WTC11 (cell line): ENCODE measurements at regions of chr20 and their contacts with region 1.

Region 1: GRCh38 chr20:51042654-51043247 is 19.8 kb upstream of the KCNG1 start:
- DNase-seq: peak; percentile 65
- ATAC-seq: peak; percentile 93
- H3K4me3 Mint-ChIP-seq: no peak overlapping the region
- H3K27ac Mint-ChIP-seq: no peak overlapping the region
- H3K4me1 Mint-ChIP-seq: no peaks in the 10 kb centered on the region
- H3K27me3 Mint-ChIP-seq: no peaks in the 10 kb centered on the region; the same call in 1 of the 2 replicates
- CTCF ChIP-seq: 0 out of 2 replicates have a peak, but pooled peaks have one; percentile 27

Region 2: DNA sequence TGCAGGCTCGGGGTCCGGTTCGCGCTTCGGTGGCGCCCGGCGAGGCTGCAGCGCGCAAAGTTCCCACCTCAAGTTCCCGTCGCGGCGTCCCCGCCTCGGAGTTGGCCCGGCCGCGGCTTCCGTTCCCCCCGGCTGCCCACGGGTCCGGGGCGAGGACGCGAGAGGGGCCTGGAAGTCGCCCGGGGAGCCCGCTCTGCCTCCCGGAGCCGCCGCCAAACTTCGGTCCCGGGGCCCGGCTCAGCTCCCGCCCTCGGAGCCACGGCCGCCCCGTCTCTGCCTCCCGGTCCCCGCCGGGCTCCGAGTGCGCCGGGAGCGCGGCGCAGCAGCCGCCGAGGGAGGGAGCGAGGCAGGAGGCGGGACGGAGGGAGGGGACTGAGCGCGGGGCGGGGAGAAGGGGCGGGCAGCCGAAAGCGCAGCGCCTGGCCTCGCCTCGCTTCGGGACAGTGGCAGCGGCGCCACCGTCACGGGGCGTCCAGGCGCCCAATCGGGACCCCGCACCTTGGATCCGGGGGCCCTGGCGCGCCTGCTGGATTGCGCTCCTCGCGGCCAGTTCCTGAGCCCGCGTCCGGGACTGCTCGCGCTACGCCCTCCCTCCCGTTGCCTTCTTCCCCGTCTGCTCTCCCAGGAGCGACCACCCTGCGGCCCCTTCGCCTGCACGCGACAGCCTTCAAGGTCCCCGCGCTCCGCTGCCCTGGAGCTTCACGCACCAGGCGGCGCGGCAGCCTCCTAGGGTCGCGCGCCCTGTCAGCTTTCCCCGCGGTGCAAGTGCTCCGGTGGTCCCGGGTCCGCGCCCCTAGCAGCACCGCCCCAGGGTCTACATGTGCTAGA is 19.7 kb before region 1 on chr20 and contains the start of gene KCNG1:
- CTCF ChIA-PET with region 1: interaction called, 21 read pairs
- POLR2A ChIA-PET with region 1: no interaction called
- DNase-seq: peak; percentile 79
- ATAC-seq: peak; percentile 82
- H3K4me3 Mint-ChIP-seq: peak within 1 kb of the TSS; percentile 72
- H3K27ac Mint-ChIP-seq: no peak within 1 kb of the TSS
- H3K4me1 Mint-ChIP-seq: peaks cover 36% of the 10 kb centered on the region
- H3K27me3 Mint-ChIP-seq: peaks cover 49% of the 10 kb centered on the region
- CTCF ChIP-seq: no peak
- total RNA-seq, gene KCNG1: 31.2 to 34.6 TPM (median 31.6 TPM) in 3 replicates

Region 3: DNA sequence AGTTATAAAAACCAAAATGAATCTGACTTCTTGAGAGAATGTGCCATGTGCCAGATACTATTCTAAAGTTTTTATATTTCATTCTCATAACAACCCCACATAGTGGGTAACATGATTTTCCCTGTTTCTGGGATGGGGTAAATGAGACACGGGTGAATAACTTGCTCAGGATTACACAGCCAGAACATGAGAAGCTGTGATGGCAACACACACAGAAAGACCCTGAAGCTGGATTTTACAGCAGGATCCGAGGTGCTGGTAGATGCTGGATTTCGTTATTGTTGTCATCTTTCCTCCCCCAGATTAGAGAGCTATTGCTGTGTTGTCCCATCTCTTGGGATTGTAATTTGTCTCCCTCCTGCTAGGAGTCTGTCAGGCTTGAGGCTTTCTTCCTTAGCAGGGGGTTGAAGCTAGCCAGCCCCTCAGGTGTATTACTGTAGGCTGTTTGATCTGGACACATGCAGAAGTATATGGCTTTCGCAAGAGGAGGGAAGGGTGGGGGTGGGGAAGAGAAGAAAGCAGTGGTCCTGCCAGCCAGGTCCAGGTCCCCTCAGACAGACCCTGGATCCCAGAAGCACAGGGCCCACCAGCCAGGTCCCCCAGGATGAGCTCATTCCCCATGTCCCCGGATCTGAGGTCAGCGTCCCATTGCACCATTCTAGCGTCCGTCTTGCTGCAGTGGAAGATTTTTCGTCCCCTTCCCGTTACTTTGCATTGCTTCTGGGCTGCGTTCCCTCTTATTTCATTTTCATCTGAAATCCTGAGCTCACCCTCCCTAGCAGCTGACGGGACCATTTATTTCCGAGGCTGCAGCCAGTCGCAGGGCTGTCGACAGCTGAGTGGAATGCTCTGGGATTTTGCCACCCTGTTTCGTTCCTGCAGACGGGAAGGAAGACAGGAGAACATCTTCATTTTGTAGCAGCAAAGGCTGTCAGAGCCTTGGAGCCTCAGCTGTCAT is 12.5 kb before region 1 on chr20:
- CTCF ChIA-PET with region 1: interaction called, 21 read pairs
- POLR2A ChIA-PET with region 1: no interaction called
- DNase-seq: no peak
- ATAC-seq: no peak
- H3K4me3 Mint-ChIP-seq: no peak overlapping the region
- H3K27ac Mint-ChIP-seq: no peak overlapping the region
- H3K4me1 Mint-ChIP-seq: 0 out of 2 replicates have a peak, but pooled peaks cover 3% of the 10 kb centered on the region
- H3K27me3 Mint-ChIP-seq: peaks cover 51% of the 10 kb centered on the region
- CTCF ChIP-seq: no peak

Region 4: GRCh38 chr20:51095633-51096513 is 53.1 kb after region 1 on chr20:
- CTCF ChIA-PET with region 1: no interaction called
- POLR2A ChIA-PET with region 1: no interaction called
- DNase-seq: no peak
- ATAC-seq: no peak
- H3K4me3 Mint-ChIP-seq: no peak overlapping the region
- H3K27ac Mint-ChIP-seq: no peak overlapping the region
- H3K4me1 Mint-ChIP-seq: peaks cover 24% of the 10 kb centered on the region
- H3K27me3 Mint-ChIP-seq: no peaks in the 10 kb centered on the region
- CTCF ChIP-seq: no peak

Region 5: DNA sequence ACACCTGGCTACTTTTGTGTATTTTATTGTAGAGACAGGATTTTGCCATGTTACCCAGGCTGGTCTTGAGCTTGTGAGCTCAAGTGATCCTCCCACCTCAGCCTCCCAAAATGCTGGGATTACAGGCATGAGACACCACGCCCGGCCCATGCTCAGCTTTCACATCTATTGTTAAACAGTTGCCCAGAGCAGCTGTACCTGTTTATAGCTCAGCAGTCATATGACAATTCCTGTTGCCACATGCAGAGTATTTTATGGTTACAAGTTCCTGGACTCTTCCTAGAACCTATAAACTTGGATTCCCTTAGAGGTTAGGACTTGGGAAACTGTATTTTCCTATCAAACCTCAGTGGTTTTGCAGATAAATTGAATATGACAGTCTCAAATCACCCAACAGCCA is 168.4 kb after region 1 on chr20:
- CTCF ChIA-PET with region 1: no interaction called
- POLR2A ChIA-PET with region 1: no interaction called
- DNase-seq: no peak
- ATAC-seq: no peak
- H3K4me3 Mint-ChIP-seq: no peak overlapping the region
- H3K27ac Mint-ChIP-seq: no peak overlapping the region
- H3K4me1 Mint-ChIP-seq: peaks cover 19% of the 10 kb centered on the region
- H3K27me3 Mint-ChIP-seq: no peaks in the 10 kb centered on the region; the same call in 1 of the 2 replicates
- CTCF ChIP-seq: no peak